A673 (cell line): ENCODE measurements at regions of chr9 and their contacts with region 1.

Region 1: DNA sequence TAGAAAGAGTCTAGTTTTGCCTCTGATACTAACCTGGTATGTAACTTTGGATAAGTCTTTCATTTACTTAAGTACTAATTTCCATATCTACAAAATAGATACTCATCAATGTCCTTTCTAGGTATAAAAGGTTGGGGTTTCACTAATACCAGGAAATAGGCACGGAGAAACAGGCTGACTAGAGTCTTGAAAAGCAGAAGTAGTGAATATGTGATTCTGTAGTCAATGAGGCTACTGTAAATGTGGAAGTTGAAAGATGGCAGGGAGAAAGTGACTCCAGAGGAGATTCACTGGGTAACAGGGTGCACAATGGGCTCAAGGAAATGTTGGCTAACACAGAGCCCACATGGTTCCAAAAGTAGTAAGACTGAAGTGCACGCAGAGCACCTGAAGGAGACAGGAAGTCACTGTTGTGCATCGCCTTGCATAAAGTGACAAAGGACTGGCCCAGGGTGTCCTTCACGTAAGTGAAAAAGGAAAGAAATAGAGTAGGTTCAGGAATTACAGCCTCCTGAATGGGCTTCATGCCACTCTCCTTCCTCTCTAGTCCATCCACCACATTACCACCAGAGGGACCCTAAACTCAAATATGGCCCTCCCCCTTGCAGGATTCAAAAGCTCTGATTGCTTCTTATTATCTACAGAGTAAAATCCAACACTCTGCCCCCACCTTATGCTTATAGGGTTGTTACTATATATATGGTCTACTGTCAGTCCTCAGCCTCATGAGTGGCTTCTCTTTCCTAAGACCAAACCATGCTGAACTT is 288.0 kb upstream of the SMARCA2 start:
- DNase-seq: peak; percentile 57
- H3K4me3 ChIP-seq: no peak overlapping the region
- H3K27ac ChIP-seq: no peak overlapping the region
- H3K4me1 ChIP-seq: no peaks in the 10 kb centered on the region
- H3K27me3 ChIP-seq: peaks cover 3% of the 10 kb centered on the region
- CTCF ChIP-seq: peak; percentile 54

Region 2: GRCh38 chr9:1490341-1491232 is 236.6 kb before region 1 on chr9:
- CTCF ChIA-PET with region 1: no interaction called
- POLR2A ChIA-PET with region 1: no interaction called
- intact Hi-C with region 1: no loop called
- DNase-seq: no peak
- H3K4me3 ChIP-seq: no peak overlapping the region
- H3K27ac ChIP-seq: no peak overlapping the region
- H3K4me1 ChIP-seq: no peaks in the 10 kb centered on the region
- H3K27me3 ChIP-seq: no peaks in the 10 kb centered on the region
- CTCF ChIP-seq: no peak

Region 3: GRCh38 chr9:1837449-1838084 is 110.4 kb after region 1 on chr9:
- CTCF ChIA-PET with region 1: interaction called, 4 read pairs
- POLR2A ChIA-PET with region 1: no interaction called
- intact Hi-C with region 1: loop called (anchors 10 kb)
- DNase-seq: peak; percentile 39
- H3K4me3 ChIP-seq: no peak overlapping the region
- H3K27ac ChIP-seq: no peak overlapping the region
- H3K4me1 ChIP-seq: peaks cover 15% of the 10 kb centered on the region
- H3K27me3 ChIP-seq: peaks cover 3% of the 10 kb centered on the region
- CTCF ChIP-seq: peak; percentile 71

Region 4: GRCh38 chr9:1869843-1870242 is 142.7 kb after region 1 on chr9:
- CTCF ChIA-PET with region 1: interaction called, 4 read pairs
- POLR2A ChIA-PET with region 1: no interaction called
- intact Hi-C with region 1: loop called (anchors 1 kb)
- DNase-seq: peak; percentile 67
- H3K4me3 ChIP-seq: no peak overlapping the region
- H3K27ac ChIP-seq: no peak overlapping the region
- H3K4me1 ChIP-seq: peaks cover 6% of the 10 kb centered on the region
- H3K27me3 ChIP-seq: peaks cover 13% of the 10 kb centered on the region
- CTCF ChIP-seq: peak; percentile 74

Region 5: DNA sequence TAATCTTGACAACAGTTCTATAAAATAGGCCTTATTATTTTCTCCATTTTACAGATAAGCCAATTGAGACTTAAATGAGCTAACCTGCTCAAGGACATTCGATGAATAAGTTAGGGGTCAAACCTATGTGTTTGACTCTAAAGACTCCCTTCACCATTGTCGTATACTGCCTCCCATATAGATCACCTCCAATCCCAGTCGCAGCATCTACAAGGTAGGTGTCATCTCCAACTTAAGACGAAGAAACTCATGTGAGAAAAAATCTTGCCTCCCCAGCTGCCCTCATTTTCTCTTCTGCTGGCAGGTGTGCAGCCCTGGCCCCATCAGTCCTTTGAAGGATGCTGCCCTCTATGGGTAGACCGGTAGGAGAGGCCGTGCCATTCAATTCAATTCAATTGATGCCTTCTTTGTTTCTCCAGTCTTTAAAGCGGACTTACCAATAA is 212.8 kb after region 1 on chr9:
- CTCF ChIA-PET with region 1: no interaction called
- POLR2A ChIA-PET with region 1: no interaction called
- intact Hi-C with region 1: loop called (anchors 5 kb)
- DNase-seq: peak; percentile 48
- H3K4me3 ChIP-seq: no peak overlapping the region
- H3K27ac ChIP-seq: no peak overlapping the region
- H3K4me1 ChIP-seq: no peaks in the 10 kb centered on the region
- H3K27me3 ChIP-seq: no peaks in the 10 kb centered on the region
- CTCF ChIP-seq: peak; percentile 90

Region 6: DNA sequence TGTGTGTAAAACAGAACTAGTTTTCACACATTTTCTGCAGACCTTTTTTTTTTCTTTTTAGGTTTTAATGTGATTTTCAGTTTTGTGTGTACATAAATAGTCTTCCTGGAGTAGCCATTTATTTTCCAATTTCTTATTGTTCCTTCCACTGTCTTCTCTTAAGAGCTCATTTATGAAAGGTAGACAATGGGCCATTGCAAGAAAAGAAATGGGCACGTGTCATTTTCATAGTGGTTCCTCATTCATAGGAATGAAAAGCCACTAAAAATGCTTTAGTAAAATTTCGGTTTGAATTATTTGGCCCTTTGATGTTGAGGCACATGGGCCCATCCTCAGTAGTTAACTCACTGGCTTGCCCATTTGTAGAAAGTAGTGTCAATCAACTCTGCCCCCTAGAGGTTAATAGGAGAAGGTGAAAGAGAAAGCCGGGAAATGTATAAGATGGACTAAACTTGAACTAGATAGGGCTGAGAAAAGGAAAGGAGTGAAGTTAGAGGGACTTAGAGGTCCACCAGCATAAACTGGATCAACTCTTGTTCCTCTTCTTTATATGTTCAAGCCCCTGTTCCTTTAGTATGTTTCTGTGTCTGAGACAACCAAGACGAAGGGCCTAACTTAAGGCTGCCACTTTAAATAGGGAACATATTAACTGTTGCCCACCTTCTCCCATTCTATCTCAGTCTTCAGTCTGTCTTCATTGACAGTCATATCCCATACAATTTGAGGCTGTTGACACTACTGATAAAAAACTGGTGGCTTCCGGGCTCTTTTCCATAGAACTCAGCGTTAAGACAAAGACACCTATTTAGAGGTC is 360.5 kb after region 1 on chr9:
- CTCF ChIA-PET with region 1: no interaction called
- POLR2A ChIA-PET with region 1: no interaction called
- intact Hi-C with region 1: loop called (anchors 10 kb)
- DNase-seq: peak; percentile 75
- H3K4me3 ChIP-seq: no peak overlapping the region
- H3K27ac ChIP-seq: no peak overlapping the region
- H3K4me1 ChIP-seq: peaks cover 8% of the 10 kb centered on the region
- H3K27me3 ChIP-seq: no peaks in the 10 kb centered on the region
- CTCF ChIP-seq: peak; percentile 87